Activated T-helper 1 cell treated with anti-CD3 and anti-CD28 coated beads, Interleukin-12 subunit alpha, Interleukin-12 subunit beta, Interleukin-2, Interleukin-4 antibody, amounts not matched to agents 30 ng/mL and 10 ng/mL and 1 ng/mL, durations not matched to agents 14 hours and 24 hours and 36 hours (primary cell): ENCODE measurements at regions of chr18 and their contacts with region 1.

Region 1: DNA sequence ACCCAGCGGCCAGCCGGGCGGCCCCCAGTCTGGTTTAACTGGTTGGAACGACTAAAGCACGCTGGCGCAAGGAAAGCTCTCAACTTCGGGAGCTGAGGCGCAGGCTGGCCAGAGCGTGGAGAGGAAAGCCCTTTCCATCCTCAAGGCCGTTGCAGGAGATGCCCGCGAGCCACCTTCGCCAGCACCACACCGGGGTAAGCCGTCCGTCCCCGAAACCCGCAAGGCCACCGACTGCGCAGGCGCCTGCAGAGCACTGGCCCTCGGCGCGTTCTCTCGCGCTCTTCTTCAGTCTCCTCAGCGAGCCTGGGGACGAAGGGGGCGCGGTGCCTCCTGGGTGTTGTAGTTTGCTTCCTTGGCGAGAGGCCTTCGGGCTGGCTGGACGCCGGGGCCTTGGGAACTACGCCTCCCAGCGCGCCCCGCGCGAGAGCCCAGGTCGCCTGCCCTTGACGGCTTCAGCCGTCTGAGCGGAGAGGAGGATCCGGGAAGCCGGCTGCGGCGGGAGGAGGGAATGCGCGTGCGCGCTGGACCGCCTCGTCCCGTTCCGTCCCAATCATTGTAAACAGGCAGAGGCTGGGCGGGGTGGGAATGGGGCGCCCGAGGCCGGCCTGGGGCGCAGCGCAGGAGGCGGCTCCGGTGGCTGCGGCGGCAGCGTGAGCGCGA is at the start of gene RALBP1:
- DNase-seq: peak; percentile 98
- H3K4me3 Mint-ChIP-seq: peak within 1 kb of the TSS; percentile 89
- H3K27ac Mint-ChIP-seq: peak within 1 kb of the TSS; percentile 95
- H3K4me1 Mint-ChIP-seq: peaks cover 30% of the 10 kb centered on the region
- H3K27me3 Mint-ChIP-seq: peaks cover 4% of the 10 kb centered on the region
- total RNA-seq, gene RALBP1: 40.9 and 42.4 TPM in 2 replicates

Region 2: GRCh38 chr18:7946734-7947377 is 1528.3 kb before region 1 on chr18:
- intact Hi-C with region 1: loop called (anchors 10 kb)
- DNase-seq: peak; percentile 7
- H3K4me3 Mint-ChIP-seq: peak overlapping the region; percentile 85
- H3K27ac Mint-ChIP-seq: peak overlapping the region; percentile 57
- H3K4me1 Mint-ChIP-seq: peaks cover 12% of the 10 kb centered on the region
- H3K27me3 Mint-ChIP-seq: no peaks in the 10 kb centered on the region

Region 3: DNA sequence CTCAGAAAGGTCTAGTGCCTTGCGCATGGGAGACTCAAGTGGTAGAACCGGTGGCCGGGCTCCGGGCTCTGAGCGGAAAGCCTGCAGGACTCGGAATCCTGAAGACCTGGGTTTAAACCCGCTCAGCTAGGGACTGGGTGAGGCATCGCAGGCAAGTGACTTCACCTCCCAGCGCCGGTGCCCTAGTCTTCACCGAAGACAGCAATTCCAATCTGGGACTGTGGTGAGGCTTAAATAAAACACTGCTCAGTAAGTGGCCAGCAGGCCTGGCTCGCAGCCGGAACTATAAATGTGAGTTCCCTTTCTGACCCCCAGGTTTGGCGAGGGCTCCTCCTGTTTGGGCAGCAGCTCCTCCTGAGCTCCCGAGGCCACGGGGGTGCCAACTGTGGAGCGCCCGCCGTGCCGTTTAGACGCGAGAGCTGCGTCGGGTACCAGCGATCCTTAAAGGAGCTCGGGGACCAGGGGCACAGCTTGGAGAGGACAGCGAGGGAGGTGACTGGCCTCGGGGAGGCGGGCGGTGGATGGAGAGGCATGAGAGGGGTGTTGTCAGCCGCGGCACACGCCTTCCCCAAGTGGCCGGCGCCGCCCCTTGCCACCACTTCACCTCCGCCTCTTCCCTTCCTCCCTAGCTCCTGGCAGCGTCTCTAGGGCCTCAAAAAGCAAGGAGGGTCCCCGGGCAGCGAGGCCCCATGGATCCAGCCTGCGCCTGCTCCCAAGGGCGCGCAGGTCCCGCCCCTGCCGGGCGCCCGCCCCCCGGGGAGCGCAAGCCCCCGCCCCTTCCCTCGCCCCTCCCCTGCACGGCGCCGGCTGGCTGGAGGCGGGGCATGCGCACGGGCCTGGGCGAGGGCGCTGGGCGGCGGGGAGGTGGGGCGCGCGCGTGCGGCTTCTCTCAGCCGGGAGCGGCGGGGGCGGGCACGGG is 770.5 kb before region 1 on chr18:
- intact Hi-C with region 1: loop called (anchors 1 kb)
- DNase-seq: peak; percentile 80
- H3K4me3 Mint-ChIP-seq: peak overlapping the region; percentile 89
- H3K27ac Mint-ChIP-seq: peak overlapping the region; percentile 23
- H3K4me1 Mint-ChIP-seq: peaks cover 14% of the 10 kb centered on the region
- H3K27me3 Mint-ChIP-seq: peaks cover 69% of the 10 kb centered on the region

Region 4: GRCh38 chr18:9136315-9137155 is 338.6 kb before region 1 on chr18 and contains the start of gene ANKRD12:
- intact Hi-C with region 1: loop called (anchors 1 kb)
- DNase-seq: peak; percentile 98
- H3K4me3 Mint-ChIP-seq: peak within 1 kb of the TSS; percentile 94
- H3K27ac Mint-ChIP-seq: peak within 1 kb of the TSS; percentile 99
- H3K4me1 Mint-ChIP-seq: peaks cover 54% of the 10 kb centered on the region
- H3K27me3 Mint-ChIP-seq: no peaks in the 10 kb centered on the region
- total RNA-seq, gene ANKRD12: 61.3 and 62.2 TPM in 2 replicates

Region 5: GRCh38 chr18:9494766-9495331 is 19.7 kb after region 1 on chr18:
- intact Hi-C with region 1: no loop called
- DNase-seq: no peak
- H3K4me3 Mint-ChIP-seq: no peak overlapping the region
- H3K27ac Mint-ChIP-seq: no peak overlapping the region
- H3K4me1 Mint-ChIP-seq: peaks cover 24% of the 10 kb centered on the region
- H3K27me3 Mint-ChIP-seq: no peaks in the 10 kb centered on the region

Region 6: DNA sequence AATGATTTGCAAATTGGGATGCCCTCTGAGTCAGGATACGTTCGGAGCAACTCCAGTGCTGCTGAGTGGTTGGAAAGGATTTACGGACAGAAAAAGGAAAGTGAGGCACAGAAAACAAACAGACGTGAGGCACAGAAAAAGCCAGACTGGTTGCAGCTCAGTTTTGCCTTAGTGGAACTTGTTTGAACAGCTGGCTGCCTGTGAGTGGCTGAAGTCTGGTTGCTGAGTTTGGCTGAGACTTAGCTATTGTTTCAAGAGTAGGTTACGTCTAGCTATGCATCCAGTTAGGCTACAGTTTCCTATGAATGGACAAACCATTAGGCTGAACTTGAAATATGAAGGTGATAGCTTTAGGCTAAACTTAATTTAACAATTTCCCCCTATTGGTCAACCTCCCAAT is 695.3 kb after region 1 on chr18:
- intact Hi-C with region 1: no loop called
- DNase-seq: no peak
- H3K4me3 Mint-ChIP-seq: no peak overlapping the region
- H3K27ac Mint-ChIP-seq: no peak overlapping the region
- H3K4me1 Mint-ChIP-seq: no peaks in the 10 kb centered on the region
- H3K27me3 Mint-ChIP-seq: no peaks in the 10 kb centered on the region

Region 7: GRCh38 chr18:10525371-10526210 is 1050.5 kb after region 1 on chr18 and contains the start of gene NAPG:
- intact Hi-C with region 1: loop called (anchors 10 kb)
- DNase-seq: peak; percentile 91
- H3K4me3 Mint-ChIP-seq: peak within 1 kb of the TSS; percentile 97
- H3K27ac Mint-ChIP-seq: peak within 1 kb of the TSS; percentile 98
- H3K4me1 Mint-ChIP-seq: peaks cover 63% of the 10 kb centered on the region
- H3K27me3 Mint-ChIP-seq: peaks cover 7% of the 10 kb centered on the region
- total RNA-seq, gene NAPG: 37.4 and 40.3 TPM in 2 replicates